ENCODE measurements at regions of chr10 and their contacts with region 1.

Region 1: GRCh38 chr10:103966671-103967447 is at the start of gene SLK:
- DNase-seq: peak; percentile 59
- ATAC-seq: peak; percentile 87
- H3K4me3 ChIP-seq: peak within 1 kb of the TSS; percentile 73 to 83
- H3K27ac ChIP-seq: peak within 1 kb of the TSS; percentile 95
- H3K4me1 ChIP-seq: peaks cover 28 to 46% of the 10 kb centered on the region in 2 experiments; a peak in 3 of 4 replicates
- H3K27me3 ChIP-seq: no peaks in the 10 kb centered on the region
- CTCF ChIP-seq: no peak
- POLR2A ChIP-seq: peak; percentile 70
- RAD21 ChIP-seq: no peak
- total RNA-seq, gene SLK: 44.2 TPM

Region 2: GRCh38 chr10:103333925-103334520 is 632.8 kb before region 1 on chr10:
- CTCF ChIA-PET with region 1: no interaction called
- POLR2A ChIA-PET with region 1: no interaction called
- RAD21 ChIA-PET with region 1: no interaction called
- intact Hi-C with region 1: no loop called
- DNase-seq: peak; percentile 32
- ATAC-seq: no peak
- H3K4me3 ChIP-seq: no peak overlapping the region
- H3K27ac ChIP-seq: no peak overlapping the region
- H3K4me1 ChIP-seq: no peaks in the 10 kb centered on the region
- H3K27me3 ChIP-seq: no peaks in the 10 kb centered on the region
- CTCF ChIP-seq: peak; percentile 68 to 90 (median 77)
- POLR2A ChIP-seq: no peak
- RAD21 ChIP-seq: peak; percentile 84

Region 3: DNA sequence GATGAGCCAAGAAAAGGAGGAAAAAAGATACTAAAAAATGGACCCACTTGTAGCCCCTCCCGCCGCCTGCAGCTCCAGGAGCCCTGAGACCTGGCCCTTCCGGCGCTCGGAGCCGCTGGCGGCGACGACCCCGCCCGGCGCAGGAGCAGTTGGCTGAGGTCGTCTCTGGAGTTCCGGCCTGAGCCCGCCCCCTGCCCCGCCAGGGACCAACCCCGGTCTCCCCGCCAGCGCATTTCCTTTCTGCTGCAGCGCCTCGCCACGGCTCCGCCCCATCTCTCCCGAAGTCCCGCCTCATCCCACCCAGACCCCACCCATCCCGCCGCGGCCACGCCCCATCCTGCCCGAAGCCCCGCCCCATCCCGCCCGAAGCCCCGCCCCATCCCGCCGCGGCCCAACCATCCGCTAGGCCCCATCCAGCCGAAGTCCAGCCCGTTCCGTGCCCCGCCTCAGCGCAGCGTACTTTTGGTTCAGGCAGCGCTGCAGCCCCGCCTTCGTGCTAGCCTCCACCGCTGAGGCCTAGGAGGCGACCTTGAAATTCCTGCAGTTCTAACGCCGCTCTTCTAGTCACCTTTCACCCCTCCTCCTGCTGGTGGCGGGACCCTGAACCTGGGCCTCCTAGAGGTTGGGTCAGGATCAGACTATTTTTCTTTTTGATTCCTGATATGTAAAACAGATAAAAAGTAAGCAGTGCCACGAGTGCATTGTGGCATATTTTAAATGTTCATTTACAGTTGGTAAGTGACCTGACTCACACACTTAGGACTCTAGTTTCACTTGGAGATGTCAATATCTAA is 48.6 kb before region 1 on chr10 and contains the start of gene STN1:
- CTCF ChIA-PET with region 1: interaction called, 3 read pairs
- POLR2A ChIA-PET with region 1: interaction called, 4 read pairs
- RAD21 ChIA-PET with region 1: no interaction called
- intact Hi-C with region 1: loop called (anchors 5 kb)
- DNase-seq: peak; percentile 97
- ATAC-seq: peak; percentile 91
- H3K4me3 ChIP-seq: peak within 1 kb of the TSS; percentile 64 to 84
- H3K27ac ChIP-seq: peak within 1 kb of the TSS; percentile 97
- H3K4me1 ChIP-seq: peaks cover 24 to 47% of the 10 kb centered on the region in 2 experiments
- H3K27me3 ChIP-seq: no peaks in the 10 kb centered on the region
- CTCF ChIP-seq: peak in 2 of 3 experiments; percentile 20 to 35; a peak in 2 of 6 replicates
- POLR2A ChIP-seq: peak; percentile 78
- RAD21 ChIP-seq: no peak
- total RNA-seq, gene STN1: 74.7 TPM

Region 4: GRCh38 chr10:104099274-104099673 is 132.4 kb after region 1 on chr10:
- CTCF ChIA-PET with region 1: no interaction called
- POLR2A ChIA-PET with region 1: no interaction called
- RAD21 ChIA-PET with region 1: no interaction called
- intact Hi-C with region 1: no loop called
- DNase-seq: no peak
- ATAC-seq: no peak
- H3K4me3 ChIP-seq: no peak overlapping the region
- H3K27ac ChIP-seq: no peak overlapping the region
- H3K4me1 ChIP-seq: peaks cover 2 to 19% of the 10 kb centered on the region in 2 experiments; a peak in 3 of 4 replicates
- H3K27me3 ChIP-seq: no peaks in the 10 kb centered on the region
- CTCF ChIP-seq: no peak
- POLR2A ChIP-seq: no peak
- RAD21 ChIP-seq: no peak